ENCODE measurements at regions of chr1 and their contacts with region 1.

Region 1: DNA sequence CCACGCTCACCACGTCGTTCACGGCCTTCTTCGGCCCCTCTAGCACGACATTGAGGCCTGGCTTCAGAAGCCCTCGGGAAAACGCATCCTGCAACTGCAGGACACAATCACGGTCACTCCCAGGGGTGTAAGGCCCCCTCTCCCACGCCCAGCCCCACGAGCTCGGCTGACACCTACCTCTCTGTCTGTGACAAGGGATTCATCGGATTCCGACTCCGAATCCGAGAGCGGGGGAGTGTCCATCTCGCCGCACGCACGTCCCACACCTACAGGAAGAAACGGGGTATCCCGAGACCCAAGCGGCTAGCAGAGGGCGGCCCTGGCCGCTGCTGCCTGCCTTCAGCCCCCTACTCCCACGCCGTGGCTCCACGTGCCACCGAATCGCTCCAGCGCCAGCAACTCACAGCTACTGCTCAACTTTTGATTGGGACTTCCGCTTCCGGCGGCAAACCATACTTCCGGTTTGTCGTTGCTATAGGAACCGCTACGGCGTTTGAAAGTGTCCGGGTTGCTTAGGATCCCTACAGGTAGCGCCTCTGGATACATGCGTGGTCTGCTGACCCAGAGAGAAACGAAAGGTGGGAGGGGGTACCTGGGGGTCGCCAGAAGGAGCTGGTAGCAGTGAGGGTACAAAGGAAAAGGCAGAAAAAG is at the starts of genes CFAP57 and EBNA1BP2:
- DNase-seq: peak; percentile 94
- ATAC-seq: peak; percentile 93
- H3K4me3 Mint-ChIP-seq: peak within 1 kb of the TSS; percentile 93
- H3K27ac Mint-ChIP-seq: peak within 1 kb of the TSS; percentile 95
- H3K4me1 Mint-ChIP-seq: peaks cover 29% of the 10 kb centered on the region
- H3K27me3 Mint-ChIP-seq: peaks cover 9% of the 10 kb centered on the region
- total RNA-seq, gene CFAP57: 0.11 TPM in 1 of 2 experiments, not detected in the other
- total RNA-seq, gene EBNA1BP2: 100 to 114 TPM

Region 2: DNA sequence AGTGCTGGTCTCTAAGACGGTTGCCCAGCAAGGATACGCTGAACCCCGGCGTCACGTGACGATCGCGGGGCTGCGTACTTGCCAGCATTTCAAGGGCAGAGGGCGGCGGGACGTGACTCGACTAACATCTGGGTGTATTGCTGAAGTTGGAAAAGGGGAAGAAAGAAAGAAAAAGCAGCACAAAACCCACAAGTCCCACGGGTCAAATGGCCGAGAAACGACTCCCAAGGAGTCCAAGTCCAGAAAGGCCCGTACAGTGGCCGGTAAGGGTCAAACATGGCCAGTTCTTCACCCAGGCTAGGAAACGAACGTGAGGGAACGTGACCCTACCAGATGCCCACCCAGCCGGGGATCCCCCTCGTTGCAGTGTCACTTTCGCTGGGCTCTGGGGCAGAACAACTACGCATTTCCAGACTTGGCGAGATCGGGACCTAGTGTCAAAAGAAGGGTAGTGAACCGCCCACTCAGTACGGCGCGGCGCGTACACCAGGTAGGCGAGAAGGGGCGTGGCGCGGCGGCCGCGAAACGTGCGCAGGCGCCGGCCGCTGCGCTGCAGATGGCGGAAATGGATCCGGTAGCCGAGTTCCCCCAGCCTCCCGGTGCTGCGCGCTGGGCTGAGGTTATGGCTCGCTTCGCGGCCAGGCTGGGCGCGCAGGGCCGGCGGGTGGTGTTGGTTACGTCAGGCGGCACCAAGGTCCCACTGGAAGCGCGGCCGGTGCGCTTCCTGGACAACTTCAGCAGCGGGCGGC is 715.8 kb before region 1 on chr1 and contains the starts of genes PPCS and ZMYND12:
- CTCF ChIA-PET with region 1: no interaction called
- POLR2A ChIA-PET with region 1: no interaction called
- intact Hi-C with region 1: loop called in 1 of 2 experiments (anchors 1 kb)
- DNase-seq: peak; percentile 97
- ATAC-seq: peak; percentile 92
- H3K4me3 Mint-ChIP-seq: peak within 1 kb of the TSS; percentile 80
- H3K27ac Mint-ChIP-seq: peak within 1 kb of the TSS; percentile 99
- H3K4me1 Mint-ChIP-seq: peaks cover 27% of the 10 kb centered on the region
- H3K27me3 Mint-ChIP-seq: no peaks in the 10 kb centered on the region
- total RNA-seq, gene PPCS: 47.3 to 47.6 TPM
- total RNA-seq, gene ZMYND12: 0.64 to 1.6 TPM

Region 3: GRCh38 chr1:42816585-42817434 is 355.2 kb before region 1 on chr1 and contains the starts of genes ERMAP and SVBP:
- CTCF ChIA-PET with region 1: no interaction called
- POLR2A ChIA-PET with region 1: no interaction called
- intact Hi-C with region 1: loop called in 1 of 2 experiments (anchors 1 kb)
- DNase-seq: peak; percentile 98
- ATAC-seq: peak; percentile 90
- H3K4me3 Mint-ChIP-seq: peak within 1 kb of the TSS; percentile 77
- H3K27ac Mint-ChIP-seq: peak within 1 kb of the TSS; percentile 84
- H3K4me1 Mint-ChIP-seq: peaks cover 16% of the 10 kb centered on the region
- H3K27me3 Mint-ChIP-seq: peaks cover 2% of the 10 kb centered on the region
- total RNA-seq, gene ERMAP: 4.5 to 6.4 TPM
- total RNA-seq, gene SVBP: 14.5 to 14.6 TPM

Region 4: DNA sequence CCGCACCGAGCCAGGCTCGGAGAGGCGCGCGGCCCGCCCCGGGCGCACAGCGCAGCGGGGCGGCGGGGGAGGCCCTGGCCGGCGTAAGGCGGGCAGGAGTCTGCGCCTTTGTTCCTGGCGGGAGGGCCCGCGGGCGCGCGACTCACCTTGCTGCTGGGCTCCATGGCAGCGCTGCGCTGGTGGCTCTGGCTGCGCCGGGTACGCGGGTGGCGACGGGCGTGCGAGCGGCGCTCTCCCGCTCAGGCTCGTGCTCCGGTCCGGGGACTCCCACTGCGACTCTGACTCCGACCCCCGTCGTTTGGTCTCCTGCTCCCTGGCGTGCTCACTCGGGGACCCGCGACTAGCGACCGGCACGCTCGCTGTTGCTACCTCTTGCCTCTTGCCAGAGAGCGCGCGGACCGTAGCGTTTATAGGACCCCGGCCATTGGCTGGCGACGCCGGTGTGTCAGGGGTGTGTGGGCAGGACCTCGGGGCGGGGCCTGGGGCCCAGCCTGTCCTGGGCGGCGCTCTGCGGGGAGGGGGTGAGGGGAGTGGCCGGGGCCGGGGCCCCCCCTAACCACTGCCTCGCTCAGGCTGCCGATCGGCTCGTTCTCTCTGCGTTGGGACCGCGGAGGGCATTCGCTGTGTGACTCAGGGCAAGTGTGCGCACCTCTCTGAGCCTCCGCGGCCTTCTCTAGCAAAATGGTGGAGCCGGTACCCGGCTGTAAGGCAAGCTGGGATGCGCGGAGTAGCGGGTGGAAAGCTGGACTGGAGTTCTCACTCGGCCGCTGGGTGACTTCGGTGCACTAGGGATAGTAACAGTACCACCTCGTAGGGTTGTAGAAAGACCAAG is 213.3 kb before region 1 on chr1 and contains the start of gene SLC2A1:
- CTCF ChIA-PET with region 1: no interaction called
- POLR2A ChIA-PET with region 1: no interaction called
- intact Hi-C with region 1: loop called in 1 of 2 experiments (anchors 1 kb)
- DNase-seq: peak; percentile 99
- ATAC-seq: peak; percentile 89
- H3K4me3 Mint-ChIP-seq: peak within 1 kb of the TSS; percentile 89
- H3K27ac Mint-ChIP-seq: peak within 1 kb of the TSS; percentile 97
- H3K4me1 Mint-ChIP-seq: peaks cover 47% of the 10 kb centered on the region
- H3K27me3 Mint-ChIP-seq: peaks cover 6% of the 10 kb centered on the region
- total RNA-seq, gene SLC2A1: 115 to 125 TPM

Region 5: DNA sequence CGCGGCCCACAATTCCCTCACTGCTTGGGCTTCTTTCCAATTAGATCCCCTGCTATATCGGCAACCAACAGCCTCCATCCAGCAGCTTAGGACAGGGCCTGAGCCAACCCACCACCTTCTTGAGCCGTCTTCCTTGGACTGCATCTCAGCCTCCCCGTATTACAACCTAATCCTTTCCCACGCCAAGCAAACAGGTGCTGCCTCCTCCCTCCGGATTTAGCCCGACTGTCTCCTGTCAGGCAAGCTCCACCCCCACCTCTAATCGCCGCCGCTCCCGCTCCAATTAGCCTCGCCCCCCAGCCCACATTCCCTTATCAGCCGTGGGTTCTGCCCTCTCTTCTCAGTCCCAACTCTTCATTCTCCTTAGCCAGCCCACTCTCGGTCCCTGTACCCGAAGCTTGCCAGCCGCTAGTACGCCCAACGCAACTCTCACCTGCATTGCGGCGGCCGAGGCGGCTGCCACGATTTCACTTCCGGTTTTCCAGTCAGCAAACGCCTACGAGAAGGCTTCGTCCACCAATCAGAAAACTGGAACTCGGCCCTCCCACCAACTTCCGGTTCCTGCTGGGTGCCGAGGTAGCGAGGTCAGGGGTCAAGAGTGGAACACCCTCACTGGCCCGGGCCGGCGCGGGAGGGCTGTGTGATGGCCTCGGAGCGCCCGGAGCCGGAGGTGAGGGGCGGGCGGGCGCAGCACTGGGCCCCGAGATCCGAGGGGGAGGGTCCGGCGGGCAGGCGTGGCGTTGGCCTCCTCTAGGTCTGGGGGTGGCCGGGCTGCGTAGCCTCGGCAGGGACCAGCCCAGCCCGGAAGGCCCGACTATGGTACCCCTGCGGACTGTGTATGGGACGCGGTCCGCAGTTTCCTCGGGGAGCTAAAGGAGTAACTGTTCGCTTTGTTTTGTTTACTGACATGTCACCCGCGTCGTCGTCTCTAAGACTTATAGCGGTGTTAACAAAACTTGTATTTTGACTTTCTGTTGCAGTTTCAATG is 217.6 kb after region 1 on chr1 and contains the starts of genes MED8 and SZT2:
- CTCF ChIA-PET with region 1: interaction called, 3 read pairs
- POLR2A ChIA-PET with region 1: no interaction called
- intact Hi-C with region 1: loop called in 1 of 2 experiments (anchors 2 kb)
- DNase-seq: peak; percentile 94
- ATAC-seq: peak; percentile 93
- H3K4me3 Mint-ChIP-seq: peak within 1 kb of the TSS; percentile 99
- H3K27ac Mint-ChIP-seq: peak within 1 kb of the TSS; percentile 97
- H3K4me1 Mint-ChIP-seq: peaks cover 39% of the 10 kb centered on the region
- H3K27me3 Mint-ChIP-seq: no peaks in the 10 kb centered on the region
- total RNA-seq, gene MED8: 32.3 to 36.6 TPM
- total RNA-seq, gene SZT2: 33.6 to 36.3 TPM

Region 6: GRCh38 chr1:43776043-43776761 is 604.2 kb after region 1 on chr1:
- CTCF ChIA-PET with region 1: no interaction called
- POLR2A ChIA-PET with region 1: no interaction called
- intact Hi-C with region 1: no loop called
- DNase-seq: no peak
- ATAC-seq: no peak
- H3K4me3 Mint-ChIP-seq: no peak overlapping the region
- H3K27ac Mint-ChIP-seq: no peak overlapping the region
- H3K4me1 Mint-ChIP-seq: peaks cover 8% of the 10 kb centered on the region
- H3K27me3 Mint-ChIP-seq: no peaks in the 10 kb centered on the region

Region 7: GRCh38 chr1:43974443-43975248 is 802.6 kb after region 1 on chr1 and contains the start of gene ATP6V0B:
- CTCF ChIA-PET with region 1: no interaction called
- POLR2A ChIA-PET with region 1: no interaction called
- intact Hi-C with region 1: loop called in 1 of 2 experiments (anchors 1 kb)
- DNase-seq: peak; percentile 99
- ATAC-seq: peak; percentile 76
- H3K4me3 Mint-ChIP-seq: peak within 1 kb of the TSS; percentile 81
- H3K27ac Mint-ChIP-seq: peak within 1 kb of the TSS; percentile 88
- H3K4me1 Mint-ChIP-seq: peaks cover 48% of the 10 kb centered on the region
- H3K27me3 Mint-ChIP-seq: no peaks in the 10 kb centered on the region
- total RNA-seq, gene ATP6V0B: 39.4 to 75.6 TPM